CD14-positive monocyte (primary cell): ENCODE measurements at regions of chr12 and their contacts with region 1.

Region 1: DNA sequence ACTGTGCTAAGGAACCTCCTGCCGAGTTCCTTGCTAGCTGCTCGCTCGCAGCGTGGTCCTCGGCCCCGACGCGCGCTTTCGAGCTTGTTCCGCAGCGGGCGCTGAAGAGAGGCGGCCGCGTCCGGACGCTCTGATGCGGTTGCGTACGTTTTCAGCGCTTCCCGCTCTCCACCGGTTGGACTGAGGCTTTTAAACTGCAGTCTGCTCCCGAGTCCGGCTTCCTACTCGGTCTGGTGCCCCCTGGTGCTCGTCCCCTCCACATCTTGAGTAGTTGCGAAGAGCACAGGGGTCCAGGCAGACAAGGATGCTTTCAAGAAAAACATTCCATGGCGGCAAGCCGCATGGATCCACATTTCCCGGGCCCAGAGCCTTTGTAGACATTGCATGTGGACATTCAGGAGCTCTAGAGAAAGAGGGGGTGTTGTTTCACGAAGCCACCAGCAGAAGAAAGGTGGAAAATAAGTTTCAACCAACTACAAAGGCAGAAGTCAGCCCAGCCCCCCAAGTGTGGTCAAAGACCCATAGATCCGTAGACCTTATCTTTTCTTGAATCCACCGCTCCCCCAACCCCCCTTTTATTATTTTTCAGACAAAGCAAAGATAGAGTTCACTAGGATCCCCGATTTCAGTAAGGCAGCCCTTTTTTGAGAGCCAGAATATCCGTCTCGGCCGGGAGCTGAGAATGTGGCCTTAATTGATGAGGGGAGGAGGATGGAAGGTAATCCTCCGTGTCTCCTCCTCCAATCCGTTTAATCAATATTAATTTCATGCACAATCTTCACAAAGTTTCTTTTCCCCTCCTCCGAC is 984 bp upstream of the WNK1 start:
- DNase-seq: peak; percentile 89 to 95 (median 92)
- H3K4me3 ChIP-seq: peak overlapping the region; percentile 60 to 89 (median 74)
- H3K4me3 Mint-ChIP-seq: no peak overlapping the region
- H3K27ac ChIP-seq: peak overlapping the region; percentile 42 to 71
- H3K27ac Mint-ChIP-seq: no peak overlapping the region
- H3K4me1 ChIP-seq: peaks cover 19 to 39% of the 10 kb centered on the region in 2 donors
- H3K4me1 Mint-ChIP-seq: peaks cover 22% of the 10 kb centered on the region
- H3K27me3 ChIP-seq: no peaks in the 10 kb centered on the region
- H3K27me3 Mint-ChIP-seq: peaks cover 0 to 2% (median 0%) of the 10 kb centered on the region in 3 donors
- CTCF ChIP-seq: peak; percentile 68

Region 2: GRCh38 chr12:575948-576612 is 175.3 kb before region 1 on chr12:
- intact Hi-C with region 1: loop called (anchors 5 to 10 kb)
- DNase-seq: peak; percentile 69 to 75 (median 73)
- H3K4me3 ChIP-seq: peak overlapping the region in 2 of 3 experiments; percentile 7 to 33
- H3K4me3 Mint-ChIP-seq: peak overlapping the region; percentile 64 to 73
- H3K27ac ChIP-seq: peak overlapping the region in 1 of 2 donors; percentile 37
- H3K27ac Mint-ChIP-seq: peak overlapping the region in 6 of 7 donors; percentile 48 to 92 (median 84)
- H3K4me1 ChIP-seq: peaks cover 23 to 27% of the 10 kb centered on the region in 2 donors
- H3K4me1 Mint-ChIP-seq: peaks cover 28% of the 10 kb centered on the region
- H3K27me3 ChIP-seq: no peaks in the 10 kb centered on the region
- H3K27me3 Mint-ChIP-seq: peaks cover 0 to 6% (median 0%) of the 10 kb centered on the region in 3 donors
- CTCF ChIP-seq: peak; percentile 99

Region 3: DNA sequence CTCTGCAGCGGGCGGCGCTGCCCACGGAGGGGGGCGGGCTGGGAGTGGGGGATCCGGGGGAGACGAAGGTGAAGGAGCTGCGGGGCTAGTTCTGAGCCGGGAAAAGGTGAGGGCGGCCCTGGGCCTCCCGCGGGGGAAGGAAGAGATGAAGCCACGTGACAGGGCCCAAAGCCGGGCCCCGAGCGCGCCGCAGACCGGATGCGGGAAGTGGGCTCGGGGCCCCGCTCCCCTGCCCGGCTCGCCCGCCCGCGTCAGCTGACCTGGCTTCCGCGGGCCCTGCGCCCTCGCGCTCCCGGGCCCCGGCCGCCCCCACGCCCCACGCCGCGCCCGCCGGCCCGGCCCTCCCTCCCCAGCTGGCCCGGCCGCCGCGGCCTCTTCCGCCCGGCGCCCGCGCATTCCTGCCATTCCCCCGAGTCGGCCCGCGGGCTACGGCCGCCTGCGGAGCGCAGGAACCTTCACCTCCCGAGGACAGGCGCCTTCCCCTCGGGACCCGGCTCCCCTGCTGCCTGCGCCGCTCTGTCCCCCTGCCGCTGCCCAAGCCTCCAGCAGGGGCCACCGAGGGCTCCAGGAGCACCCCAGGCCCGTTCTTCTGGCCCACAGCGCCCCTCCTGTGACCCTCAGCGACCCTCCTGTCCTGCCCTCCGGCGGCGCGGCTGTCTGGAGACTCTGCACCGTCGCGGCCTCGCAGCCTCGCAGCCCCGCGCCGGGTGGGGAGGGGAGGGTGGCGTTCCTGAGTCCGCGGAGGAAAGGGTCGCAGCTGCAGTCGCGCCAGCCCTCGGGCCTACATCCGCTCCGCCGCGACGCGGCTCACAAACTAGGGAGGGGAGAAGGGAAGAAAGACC is 108.5 kb before region 1 on chr12:
- intact Hi-C with region 1: loop called (anchors 2 to 5 kb)
- DNase-seq: peak; percentile 75 to 78 (median 76)
- H3K4me3 ChIP-seq: peak overlapping the region; percentile 58 to 76 (median 71)
- H3K4me3 Mint-ChIP-seq: peak overlapping the region; percentile 86 to 96
- H3K27ac ChIP-seq: peak overlapping the region; percentile 90 to 93
- H3K27ac Mint-ChIP-seq: peak overlapping the region; percentile 94 to 98 (median 96)
- H3K4me1 ChIP-seq: peaks cover 71 to 76% of the 10 kb centered on the region in 2 donors
- H3K4me1 Mint-ChIP-seq: peaks cover 71% of the 10 kb centered on the region
- H3K27me3 ChIP-seq: no peaks in the 10 kb centered on the region
- H3K27me3 Mint-ChIP-seq: no peaks in the 10 kb centered on the region
- CTCF ChIP-seq: peak; percentile 57

Region 4: GRCh38 chr12:685388-685787 is 66.0 kb before region 1 on chr12:
- intact Hi-C with region 1: loop called in 1 of 2 experiments (anchors 10 kb)
- DNase-seq: peak; percentile 81 to 88 (median 83)
- H3K4me3 ChIP-seq: no peak overlapping the region
- H3K4me3 Mint-ChIP-seq: peak overlapping the region in 1 of 2 donors; percentile 51
- H3K27ac ChIP-seq: peak overlapping the region; percentile 70 to 89
- H3K27ac Mint-ChIP-seq: peak overlapping the region; percentile 78 to 96 (median 91)
- H3K4me1 ChIP-seq: peaks cover 17 to 20% of the 10 kb centered on the region in 2 donors
- H3K4me1 Mint-ChIP-seq: peaks cover 12% of the 10 kb centered on the region
- H3K27me3 ChIP-seq: no peaks in the 10 kb centered on the region
- H3K27me3 Mint-ChIP-seq: peaks cover 1 to 6% (median 2%) of the 10 kb centered on the region in 3 donors
- CTCF ChIP-seq: no peak

Region 5: DNA sequence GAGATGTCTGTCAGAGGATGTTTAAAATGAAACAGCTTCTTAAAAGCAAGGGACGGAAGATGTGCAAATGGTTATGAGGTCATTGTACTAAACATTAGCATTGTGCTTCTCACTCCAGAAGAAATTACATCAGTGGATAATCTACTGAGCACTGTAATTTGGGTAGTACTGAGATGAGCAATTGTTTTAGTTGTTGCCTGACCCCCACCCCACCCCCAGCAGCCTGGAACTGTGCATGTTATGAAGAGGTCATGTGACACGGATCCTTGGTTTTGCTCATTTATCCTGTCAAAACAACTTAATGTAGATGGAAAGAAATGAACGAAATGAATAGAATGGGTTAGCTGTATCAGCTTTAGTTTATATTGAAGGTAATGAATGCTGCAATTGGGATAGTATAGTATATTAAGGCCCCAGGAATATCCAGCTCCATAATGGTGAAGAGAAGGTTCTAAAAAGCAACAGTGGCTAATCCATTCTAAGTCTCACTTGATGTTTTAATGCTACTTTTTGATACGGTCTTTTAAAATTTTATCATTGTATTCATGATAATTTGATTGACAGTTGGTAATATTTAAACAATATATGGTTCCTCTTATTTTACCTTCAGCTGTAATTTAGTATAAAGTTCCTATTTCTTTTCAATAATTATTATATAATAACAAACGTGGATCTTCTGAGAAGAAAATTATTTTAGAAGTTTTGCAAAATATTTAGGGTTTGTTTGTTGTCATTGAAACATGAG is 59.4 kb after region 1 on chr12:
- intact Hi-C with region 1: loop called (anchors 5 to 10 kb)
- DNase-seq: no peak
- H3K4me3 ChIP-seq: no peak overlapping the region
- H3K4me3 Mint-ChIP-seq: no peak overlapping the region
- H3K27ac ChIP-seq: no peak overlapping the region
- H3K27ac Mint-ChIP-seq: peak overlapping the region in 2 of 7 donors; percentile 37 to 39
- H3K4me1 ChIP-seq: peaks cover 26 to 31% of the 10 kb centered on the region in 2 donors
- H3K4me1 Mint-ChIP-seq: peaks cover 31% of the 10 kb centered on the region
- H3K27me3 ChIP-seq: no peaks in the 10 kb centered on the region
- H3K27me3 Mint-ChIP-seq: no peaks in the 10 kb centered on the region
- CTCF ChIP-seq: no peak

Region 6: DNA sequence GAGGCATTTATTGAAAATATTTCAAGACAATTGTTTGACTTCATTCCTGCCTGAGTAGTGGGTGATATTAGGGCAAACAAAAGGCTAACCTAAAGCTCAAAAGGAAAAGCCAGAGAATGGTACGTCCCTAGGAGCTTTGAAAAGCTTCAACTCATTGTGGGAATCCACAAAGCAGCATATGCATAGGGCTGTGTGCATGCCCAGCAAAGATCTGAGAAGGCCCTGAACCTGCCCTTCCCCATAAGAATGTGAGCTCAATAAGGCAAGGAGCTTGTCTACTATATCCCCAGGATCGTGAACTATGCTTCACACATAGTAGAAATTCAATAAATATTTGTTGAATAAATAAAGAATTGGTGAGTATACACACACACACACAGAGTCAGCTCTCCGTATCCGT is 217.2 kb after region 1 on chr12:
- intact Hi-C with region 1: no loop called
- DNase-seq: no peak
- H3K4me3 ChIP-seq: no peak overlapping the region
- H3K4me3 Mint-ChIP-seq: no peak overlapping the region
- H3K27ac ChIP-seq: no peak overlapping the region
- H3K27ac Mint-ChIP-seq: peak overlapping the region in 1 of 7 donors; percentile 48
- H3K4me1 ChIP-seq: peaks cover 5 to 6% of the 10 kb centered on the region in 2 donors
- H3K4me1 Mint-ChIP-seq: peaks cover 7% of the 10 kb centered on the region
- H3K27me3 ChIP-seq: no peaks in the 10 kb centered on the region
- H3K27me3 Mint-ChIP-seq: no peaks in the 10 kb centered on the region
- CTCF ChIP-seq: no peak

Region 7: DNA sequence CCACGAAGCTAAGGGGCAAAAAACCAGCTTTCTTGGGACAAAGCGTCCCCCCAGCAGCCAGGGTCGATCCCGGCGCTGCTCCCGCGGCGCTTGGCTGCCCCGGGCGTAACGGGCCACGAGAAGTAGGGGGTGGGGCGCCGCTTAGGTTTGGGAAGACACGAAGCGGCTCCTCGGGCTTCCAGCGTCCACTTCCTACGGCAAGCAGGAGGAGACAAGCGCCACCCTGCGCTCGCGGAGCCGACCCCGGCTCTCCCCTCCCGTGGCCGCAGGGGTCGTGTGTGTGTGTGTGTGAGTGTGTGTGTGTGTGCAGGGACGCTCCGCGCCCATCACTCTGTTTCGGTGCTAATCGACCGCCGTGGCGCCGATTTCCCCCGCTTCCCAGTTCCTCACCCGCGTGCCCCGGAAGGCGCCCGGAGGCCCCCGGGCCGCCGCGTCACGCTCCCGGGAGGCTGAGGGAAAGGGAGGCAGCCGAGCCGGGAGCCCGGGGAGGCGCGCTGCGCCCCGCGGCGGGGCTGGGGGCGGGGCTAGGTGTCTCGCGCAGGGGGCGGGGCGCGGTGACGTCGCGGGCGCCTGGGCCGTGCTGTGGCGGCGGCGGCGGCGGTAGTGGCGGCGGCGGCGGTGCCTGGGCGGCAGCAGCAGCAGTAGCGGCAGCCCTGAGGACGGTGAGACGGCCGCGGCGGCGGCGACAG is 239.4 kb after region 1 on chr12 and contains the start of gene ERC1:
- intact Hi-C with region 1: loop called in 1 of 2 experiments (anchors 10 kb)
- DNase-seq: peak; percentile 71 to 78 (median 77)
- H3K4me3 ChIP-seq: peak within 1 kb of the TSS; percentile 73 to 98 (median 87)
- H3K4me3 Mint-ChIP-seq: peak within 1 kb of the TSS; percentile 93 to 95
- H3K27ac ChIP-seq: peak within 1 kb of the TSS; percentile 93 to 97
- H3K27ac Mint-ChIP-seq: peak within 1 kb of the TSS; percentile 90 to 99 (median 92)
- H3K4me1 ChIP-seq: peaks cover 41 to 50% of the 10 kb centered on the region in 2 donors
- H3K4me1 Mint-ChIP-seq: peaks cover 56% of the 10 kb centered on the region
- H3K27me3 ChIP-seq: no peaks in the 10 kb centered on the region
- H3K27me3 Mint-ChIP-seq: peaks cover 0 to 2% (median 1%) of the 10 kb centered on the region in 3 donors
- CTCF ChIP-seq: no peak
- polyA plus RNA-seq, gene ERC1: 4.0 to 14.3 (median 5.1) TPM